PC-9 (cell line): ENCODE measurements at regions of chr22 and their contacts with region 1.

Region 1: GRCh38 chr22:30386960-30387827 is at the start of gene RNF215:
- DNase-seq: peak; percentile 52 to 89
- H3K4me3 ChIP-seq: peak within 1 kb of the TSS; percentile 65
- H3K27ac ChIP-seq: no peak within 1 kb of the TSS
- H3K4me1 ChIP-seq: peaks cover 15% of the 10 kb centered on the region
- H3K27me3 ChIP-seq: no peaks in the 10 kb centered on the region
- CTCF ChIP-seq: peak; percentile 94
- total RNA-seq, gene RNF215: 24.0 and 33.8 TPM in 2 replicates

Region 2: DNA sequence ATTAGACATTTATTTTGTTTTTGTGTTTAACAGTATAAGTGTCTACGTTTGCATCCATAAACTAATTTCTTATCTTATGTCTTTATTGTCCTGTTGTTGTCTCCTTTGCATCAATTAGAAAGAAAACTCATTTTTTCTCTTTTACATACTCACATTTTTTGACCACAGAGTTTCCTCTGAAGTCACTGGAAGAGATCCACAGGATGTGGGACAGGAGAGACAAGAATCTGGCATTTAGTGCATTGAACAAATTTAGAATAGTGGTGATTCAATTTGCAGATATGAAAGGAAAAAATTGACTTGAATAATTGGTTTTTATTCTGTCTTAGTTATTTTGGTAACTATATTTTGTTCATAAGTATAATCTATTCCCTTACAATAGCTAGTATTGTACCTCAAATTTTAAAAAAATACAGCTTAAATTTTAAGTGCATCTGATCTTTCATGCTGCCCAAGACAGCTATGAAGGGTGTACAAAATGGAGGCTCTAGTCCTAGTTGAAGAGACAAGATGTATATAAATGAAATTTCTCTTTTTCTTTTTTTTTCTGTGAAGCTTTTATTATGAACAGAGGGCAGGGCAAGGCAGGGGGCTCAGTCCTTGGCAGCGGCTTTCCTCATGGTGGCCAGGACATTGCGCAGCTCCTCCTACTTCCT is 282.6 kb before region 1 on chr22:
- CTCF ChIA-PET with region 1: no interaction called
- POLR2A ChIA-PET with region 1: no interaction called
- intact Hi-C with region 1: loop called (anchors 10 kb)
- DNase-seq: no peak
- H3K4me3 ChIP-seq: no peak overlapping the region
- H3K27ac ChIP-seq: no peak overlapping the region
- H3K4me1 ChIP-seq: no peaks in the 10 kb centered on the region; the same call in none of the 2 replicates
- H3K27me3 ChIP-seq: no peaks in the 10 kb centered on the region
- CTCF ChIP-seq: no peak

Region 3: GRCh38 chr22:30262917-30263741 is 124.1 kb before region 1 on chr22:
- CTCF ChIA-PET with region 1: no interaction called
- POLR2A ChIA-PET with region 1: no interaction called
- intact Hi-C with region 1: loop called (anchors 1 kb)
- DNase-seq: peak in 1 of 2 experiments; percentile 64
- H3K4me3 ChIP-seq: peak overlapping the region; percentile 49; the same call in 1 of the 2 replicates
- H3K27ac ChIP-seq: no peak overlapping the region
- H3K4me1 ChIP-seq: peaks cover 51% of the 10 kb centered on the region
- H3K27me3 ChIP-seq: no peaks in the 10 kb centered on the region
- CTCF ChIP-seq: peak; percentile 100

Region 4: DNA sequence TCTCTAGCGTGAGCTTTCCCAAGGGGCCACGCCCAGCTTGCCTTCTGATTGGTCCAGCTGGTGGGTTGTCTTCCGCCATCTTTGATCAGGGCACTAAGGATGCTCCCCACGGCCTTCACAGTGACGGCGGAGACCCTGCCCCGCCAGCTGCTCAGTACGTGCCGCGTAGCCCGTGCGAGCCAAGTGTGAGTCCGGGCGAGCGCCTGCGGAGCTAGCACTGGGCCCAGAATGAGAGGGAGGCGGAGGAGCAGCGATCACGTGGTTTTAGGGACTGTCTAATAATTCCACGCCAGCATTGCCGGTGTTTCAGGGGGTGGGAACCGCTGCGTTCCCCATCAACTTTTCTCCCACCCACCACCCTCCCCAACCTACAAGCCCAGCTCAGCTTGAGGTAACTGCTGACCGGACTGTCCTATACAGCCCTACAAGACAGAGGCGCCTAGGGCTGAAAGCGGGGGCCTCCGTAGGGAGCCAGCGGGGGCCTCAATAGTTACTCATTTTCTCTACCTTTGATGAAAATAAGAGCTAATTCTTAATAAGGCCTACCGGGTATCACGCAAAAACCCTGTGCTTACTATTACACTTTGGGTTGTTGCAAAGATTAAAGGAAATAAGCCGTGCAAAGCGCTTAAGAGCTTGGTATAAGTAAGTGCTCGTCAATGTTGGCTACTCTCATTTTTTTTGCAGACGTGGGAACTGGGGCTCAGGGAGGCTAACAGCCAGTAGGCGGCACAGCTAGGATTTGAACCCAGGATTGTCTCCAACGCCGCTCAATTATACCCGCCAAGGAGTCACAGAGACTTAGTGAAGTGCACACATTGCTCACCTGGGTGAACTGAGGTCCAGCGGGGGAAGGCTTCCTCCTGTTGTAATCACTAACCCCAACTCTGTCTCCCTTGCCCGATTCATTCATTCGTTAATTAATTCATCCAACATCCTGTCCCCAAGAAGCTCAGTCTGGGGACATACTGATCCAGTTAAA is 37.1 kb after region 1 on chr22:
- CTCF ChIA-PET with region 1: interaction called, 8 read pairs
- POLR2A ChIA-PET with region 1: interaction called, 7 read pairs
- intact Hi-C with region 1: loop called (anchors 1 kb)
- DNase-seq: peak; percentile 98 to 99
- H3K4me3 ChIP-seq: peak overlapping the region; percentile 70
- H3K27ac ChIP-seq: peak overlapping the region; percentile 93
- H3K4me1 ChIP-seq: peaks cover 43% of the 10 kb centered on the region
- H3K27me3 ChIP-seq: no peaks in the 10 kb centered on the region
- CTCF ChIP-seq: peak; percentile 19; the same call in 1 of the 2 replicates

Region 5: DNA sequence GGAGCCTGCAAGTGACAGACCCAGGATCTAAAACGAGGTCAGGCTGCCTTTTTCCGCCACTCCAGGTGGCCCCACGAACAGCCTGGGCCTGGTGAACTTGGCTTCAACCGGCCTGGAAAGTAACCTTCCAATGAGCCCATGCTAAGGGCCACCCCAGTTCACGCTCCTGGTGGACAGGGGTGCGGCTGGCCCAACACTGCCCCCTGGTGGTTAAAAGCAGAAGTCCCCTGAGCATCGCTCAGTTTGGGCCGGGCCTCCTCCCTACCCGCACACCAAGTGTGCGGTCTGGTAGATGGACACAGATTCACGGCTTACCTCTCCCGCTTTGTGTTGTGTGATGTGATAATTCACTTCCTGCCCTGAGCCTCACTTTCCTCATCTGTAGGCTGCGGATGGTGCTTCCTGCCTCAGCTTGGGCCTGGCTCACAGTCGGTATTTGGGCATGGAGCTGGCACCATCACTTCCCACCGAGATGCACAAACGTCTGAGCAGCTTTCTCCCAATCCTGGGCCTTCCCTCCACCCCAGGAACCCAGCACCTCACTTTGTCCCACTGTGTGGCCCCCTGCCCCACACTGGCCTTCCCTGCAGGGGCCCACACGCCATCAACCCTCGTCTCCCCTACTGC is 98.3 kb after region 1 on chr22:
- CTCF ChIA-PET with region 1: interaction called, 3 read pairs
- POLR2A ChIA-PET with region 1: no interaction called
- intact Hi-C with region 1: loop called (anchors 1 kb)
- DNase-seq: peak; percentile 49 to 69
- H3K4me3 ChIP-seq: no peak overlapping the region
- H3K27ac ChIP-seq: no peak overlapping the region
- H3K4me1 ChIP-seq: no peaks in the 10 kb centered on the region
- H3K27me3 ChIP-seq: no peaks in the 10 kb centered on the region
- CTCF ChIP-seq: peak; percentile 99

Region 6: DNA sequence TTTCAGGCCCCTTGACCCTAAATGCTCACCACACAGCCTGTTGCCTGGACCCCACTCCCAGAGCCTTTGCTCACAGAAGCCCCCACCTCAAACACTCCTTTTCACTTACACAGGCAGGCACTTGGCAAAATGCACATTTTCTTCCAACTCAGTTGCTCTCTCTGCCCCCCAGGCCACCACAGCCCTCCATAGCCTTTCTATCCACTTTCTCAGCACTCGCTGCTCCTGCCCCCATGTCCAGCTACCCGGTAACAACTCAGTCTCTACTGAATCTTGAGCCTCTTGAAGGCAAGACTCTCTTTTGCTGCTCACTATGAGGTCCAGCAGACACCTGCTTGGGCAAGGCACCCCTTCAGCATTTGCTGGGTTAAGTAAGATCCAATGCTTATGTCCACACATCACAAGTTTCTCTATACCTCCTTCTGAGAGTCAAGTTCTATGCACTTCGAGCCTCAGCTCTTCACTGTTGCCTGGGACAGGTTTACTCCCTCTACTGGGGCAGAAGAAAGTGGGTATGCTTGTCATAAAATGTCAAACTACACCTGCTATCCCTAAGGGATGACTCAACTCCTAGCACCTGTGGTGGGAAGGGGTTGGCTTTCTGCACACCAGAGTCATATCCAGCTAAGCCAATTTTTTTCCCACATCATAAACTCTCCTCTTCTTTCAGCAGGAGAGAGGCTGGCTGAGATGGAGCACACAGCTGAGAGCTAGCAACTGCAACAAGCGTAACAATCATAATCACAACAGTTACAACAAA is 544.5 kb after region 1 on chr22:
- CTCF ChIA-PET with region 1: no interaction called
- POLR2A ChIA-PET with region 1: no interaction called
- intact Hi-C with region 1: no loop called
- DNase-seq: no peak
- H3K4me3 ChIP-seq: no peak overlapping the region
- H3K27ac ChIP-seq: no peak overlapping the region
- H3K4me1 ChIP-seq: no peaks in the 10 kb centered on the region
- H3K27me3 ChIP-seq: no peaks in the 10 kb centered on the region
- CTCF ChIP-seq: no peak